ENCODE measurements at regions of chr2 and their contacts with region 1.

Region 1: GRCh38 chr2:136423516-136423996 is 305.6 kb upstream of the CXCR4 start:
- DNase-seq: no peak
- ATAC-seq: peak; percentile 99
- H3K4me3 ChIP-seq: peak overlapping the region; percentile 43; the same call in 1 of the 2 replicates
- H3K27ac ChIP-seq: no peak overlapping the region
- H3K4me1 ChIP-seq: peaks cover 4% of the 10 kb centered on the region; the same call in 1 of the 2 replicates
- H3K27me3 ChIP-seq: peaks cover 0 to 4% of the 10 kb centered on the region in 2 experiments; a peak in 3 of 4 replicates
- CTCF ChIP-seq: peak; percentile 88 to 95 (median 89); a peak in 5 of 6 replicates
- EP300 ChIP-seq: no peak
- POLR2A ChIP-seq: no peak
- RAD21 ChIP-seq: peak; percentile 78

Region 2: DNA sequence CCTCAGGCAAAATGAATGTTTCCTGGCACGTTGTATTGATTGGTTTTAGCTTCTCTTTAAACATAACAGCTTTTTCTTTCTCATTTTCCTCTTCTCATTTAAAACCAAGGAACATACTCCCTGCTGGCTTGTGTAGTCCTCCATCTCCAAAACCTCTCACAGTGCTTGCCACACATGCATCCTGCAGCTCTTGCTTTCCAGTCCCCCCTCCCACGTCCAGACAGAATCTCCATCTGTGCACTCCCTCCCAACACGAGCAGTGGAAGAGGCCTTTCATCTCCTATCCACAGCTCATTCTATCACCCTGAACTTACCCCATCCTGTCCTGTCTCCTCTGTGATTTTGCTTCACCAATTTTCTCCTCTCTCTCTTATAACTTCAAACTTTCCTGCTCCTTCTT is 242.2 kb after region 1 on chr2:
- CTCF ChIA-PET with region 1: no interaction called
- POLR2A ChIA-PET with region 1: no interaction called
- RAD21 ChIA-PET with region 1: no interaction called
- SMC1A ChIA-PET with region 1: no interaction called
- in situ Hi-C with region 1: no loop called
- intact Hi-C with region 1: loop called (anchors 5 kb)
- DNase-seq: no peak
- ATAC-seq: no peak
- H3K4me3 ChIP-seq: no peak overlapping the region
- H3K27ac ChIP-seq: no peak overlapping the region
- H3K4me1 ChIP-seq: no peaks in the 10 kb centered on the region
- H3K27me3 ChIP-seq: no peaks in the 10 kb centered on the region
- CTCF ChIP-seq: no peak
- EP300 ChIP-seq: no peak
- POLR2A ChIP-seq: no peak
- RAD21 ChIP-seq: no peak

Region 3: GRCh38 chr2:136738044-136738443 is 314.5 kb after region 1 on chr2:
- CTCF ChIA-PET with region 1: interaction called, 26 read pairs
- POLR2A ChIA-PET with region 1: no interaction called
- RAD21 ChIA-PET with region 1: interaction called, 3 read pairs
- SMC1A ChIA-PET with region 1: interaction called, 3 read pairs
- in situ Hi-C with region 1: loop called (anchors 10 kb)
- intact Hi-C with region 1: loop called (anchors 2 kb)
- DNase-seq: no peak
- ATAC-seq: no peak
- H3K4me3 ChIP-seq: no peak overlapping the region
- H3K27ac ChIP-seq: no peak overlapping the region
- H3K4me1 ChIP-seq: no peaks in the 10 kb centered on the region
- H3K27me3 ChIP-seq: no peaks in the 10 kb centered on the region
- CTCF ChIP-seq: no peak
- EP300 ChIP-seq: no peak
- POLR2A ChIP-seq: no peak
- RAD21 ChIP-seq: no peak

Measured in GM12878 (cell line).